ENCODE measurements at regions of chr14 and their contacts with region 1.

Region 1: DNA sequence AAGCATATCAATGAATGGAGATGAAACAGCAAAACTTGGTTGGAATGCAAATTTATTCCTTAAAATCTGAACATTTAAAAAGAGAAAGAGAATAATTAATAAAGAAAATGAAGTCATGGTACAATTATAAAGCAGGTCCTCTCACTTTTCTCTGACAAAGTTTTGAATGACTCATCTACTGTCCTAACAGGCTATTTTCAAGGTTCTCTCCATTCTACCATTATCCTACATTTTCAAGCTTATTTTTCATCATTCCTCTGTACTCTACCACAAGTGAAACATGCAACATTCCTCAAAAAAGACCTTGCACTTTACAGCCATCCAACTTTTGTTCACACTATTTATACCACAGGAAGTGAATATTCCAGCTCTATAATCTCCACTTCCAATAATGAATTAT is 36.9 kb upstream of the AP4S1 start:
- DNase-seq: no peak
- H3K4me3 ChIP-seq: no peak overlapping the region
- H3K27ac ChIP-seq: peak overlapping the region; percentile 41 to 56 (median 50)
- H3K4me1 ChIP-seq: peaks cover 30 to 78% (median 65%) of the 10 kb centered on the region in 4 donors
- H3K27me3 ChIP-seq: no peaks in the 10 kb centered on the region
- CTCF ChIP-seq: no peak
- EP300 ChIP-seq: no peak
- POLR2A ChIP-seq: no peak

Region 2: GRCh38 chr14:30915596-30915995 is 72.9 kb before region 1 on chr14:
- intact Hi-C with region 1: no loop called
- DNase-seq: no peak
- H3K4me3 ChIP-seq: no peak overlapping the region
- H3K27ac ChIP-seq: no peak overlapping the region
- H3K4me1 ChIP-seq: peaks cover 0 to 16% (median 12%) of the 10 kb centered on the region in 4 donors
- H3K27me3 ChIP-seq: no peaks in the 10 kb centered on the region
- CTCF ChIP-seq: no peak
- EP300 ChIP-seq: no peak
- POLR2A ChIP-seq: no peak

Region 3: GRCh38 chr14:31024577-31025366 is 36.3 kb after region 1 on chr14:
- intact Hi-C with region 1: loop called (anchors 5 kb)
- DNase-seq: no peak
- H3K4me3 ChIP-seq: peak overlapping the region; percentile 81 to 100 (median 90)
- H3K27ac ChIP-seq: peak overlapping the region; percentile 98 to 100 (median 100)
- H3K4me1 ChIP-seq: peaks cover 26 to 58% (median 46%) of the 10 kb centered on the region in 4 donors
- H3K27me3 ChIP-seq: peaks cover 0 to 3% (median 0%) of the 10 kb centered on the region in 4 donors
- CTCF ChIP-seq: no peak
- EP300 ChIP-seq: no peak
- POLR2A ChIP-seq: no peak

Measured in esophagus muscularis mucosa (tissue), 4 donors.